BJ (cell line): ENCODE measurements at regions of chr7 and their contacts with region 1.

Region 1: GRCh38 chr7:30920584-30921539 is 9.2 kb downstream of the AQP1 start:
- DNase-seq: no peak
- H3K4me3 ChIP-seq: no peak overlapping the region
- H3K27me3 ChIP-seq: no peaks in the 10 kb centered on the region
- CTCF ChIP-seq: no peak

Region 2: DNA sequence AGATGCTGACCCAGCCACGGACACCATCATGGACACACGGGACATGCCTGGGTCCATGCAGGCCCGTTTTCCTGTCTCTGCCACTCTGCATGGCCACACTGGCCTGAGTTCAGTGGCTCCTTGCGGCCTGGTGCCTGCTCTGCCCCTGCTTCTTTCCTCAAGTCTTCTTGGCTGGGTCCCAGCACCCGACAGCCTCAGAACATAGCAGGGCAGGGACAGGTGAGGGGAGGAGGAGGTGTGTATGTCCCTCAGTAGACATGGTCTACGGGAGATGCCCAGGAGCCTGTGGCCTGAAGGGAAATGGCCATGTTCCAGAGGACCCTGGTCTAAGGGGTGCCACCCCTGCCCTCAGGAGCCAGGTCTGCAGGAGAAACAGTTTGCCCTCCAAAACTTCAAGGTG is 11.4 kb before region 1 on chr7:
- CTCF ChIA-PET with region 1: no interaction called
- POLR2A ChIA-PET with region 1: interaction called, 12 read pairs
- DNase-seq: no peak
- H3K4me3 ChIP-seq: no peak overlapping the region
- H3K27me3 ChIP-seq: no peaks in the 10 kb centered on the region; the same call in 1 of the 2 replicates
- CTCF ChIP-seq: no peak